Dendritic cell treated with granulocyte-macrophage colony-stimulating factor and Interleukin-4, amounts not matched to agents 40 ng/mL and 50 ng/mL, for 4 days (primary cell): ENCODE measurements at regions of chrX and their contacts with region 1.

Region 1: GRCh38 chrX:111869639-111870034 is 6.3 kb upstream of the TRPC5OS start:
- H3K4me3 Mint-ChIP-seq: no peak overlapping the region
- H3K27ac Mint-ChIP-seq: no peak overlapping the region
- H3K4me1 Mint-ChIP-seq: peaks cover 7% of the 10 kb centered on the region
- H3K27me3 Mint-ChIP-seq: no peaks in the 10 kb centered on the region

Region 2: GRCh38 chrX:112043997-112044396 is 174.4 kb after region 1 on chrX:
- intact Hi-C with region 1: loop called (anchors 1 kb)
- H3K4me3 Mint-ChIP-seq: no peak overlapping the region
- H3K27ac Mint-ChIP-seq: no peak overlapping the region
- H3K4me1 Mint-ChIP-seq: no peaks in the 10 kb centered on the region
- H3K27me3 Mint-ChIP-seq: peaks cover 2% of the 10 kb centered on the region

Region 3: DNA sequence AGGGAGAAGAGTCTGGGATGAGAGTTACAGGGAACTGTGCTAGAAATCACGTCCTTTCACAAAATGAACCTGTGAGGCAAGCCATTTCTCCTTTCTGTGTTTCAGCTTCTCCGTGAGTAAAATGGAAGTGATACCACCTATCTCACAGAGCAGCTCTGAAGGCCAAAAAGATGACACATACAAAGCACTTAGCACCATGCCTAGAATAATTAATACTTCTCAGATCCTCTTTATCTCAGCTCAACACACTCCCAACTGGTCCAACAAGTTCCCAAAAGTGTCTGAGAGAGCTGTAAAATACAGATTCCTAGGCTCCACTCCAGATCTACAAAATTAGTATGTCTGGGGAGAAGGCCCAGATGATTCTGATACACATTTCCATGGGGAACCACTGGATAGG is 771.8 kb after region 1 on chrX:
- intact Hi-C with region 1: loop called (anchors 2 kb)
- H3K4me3 Mint-ChIP-seq: no peak overlapping the region
- H3K27ac Mint-ChIP-seq: no peak overlapping the region
- H3K4me1 Mint-ChIP-seq: no peaks in the 10 kb centered on the region
- H3K27me3 Mint-ChIP-seq: peaks cover 4% of the 10 kb centered on the region